Posterior vena cava (tissue), 2 donors: ENCODE measurements at regions of chr7 and their contacts with region 1.

Region 1: DNA sequence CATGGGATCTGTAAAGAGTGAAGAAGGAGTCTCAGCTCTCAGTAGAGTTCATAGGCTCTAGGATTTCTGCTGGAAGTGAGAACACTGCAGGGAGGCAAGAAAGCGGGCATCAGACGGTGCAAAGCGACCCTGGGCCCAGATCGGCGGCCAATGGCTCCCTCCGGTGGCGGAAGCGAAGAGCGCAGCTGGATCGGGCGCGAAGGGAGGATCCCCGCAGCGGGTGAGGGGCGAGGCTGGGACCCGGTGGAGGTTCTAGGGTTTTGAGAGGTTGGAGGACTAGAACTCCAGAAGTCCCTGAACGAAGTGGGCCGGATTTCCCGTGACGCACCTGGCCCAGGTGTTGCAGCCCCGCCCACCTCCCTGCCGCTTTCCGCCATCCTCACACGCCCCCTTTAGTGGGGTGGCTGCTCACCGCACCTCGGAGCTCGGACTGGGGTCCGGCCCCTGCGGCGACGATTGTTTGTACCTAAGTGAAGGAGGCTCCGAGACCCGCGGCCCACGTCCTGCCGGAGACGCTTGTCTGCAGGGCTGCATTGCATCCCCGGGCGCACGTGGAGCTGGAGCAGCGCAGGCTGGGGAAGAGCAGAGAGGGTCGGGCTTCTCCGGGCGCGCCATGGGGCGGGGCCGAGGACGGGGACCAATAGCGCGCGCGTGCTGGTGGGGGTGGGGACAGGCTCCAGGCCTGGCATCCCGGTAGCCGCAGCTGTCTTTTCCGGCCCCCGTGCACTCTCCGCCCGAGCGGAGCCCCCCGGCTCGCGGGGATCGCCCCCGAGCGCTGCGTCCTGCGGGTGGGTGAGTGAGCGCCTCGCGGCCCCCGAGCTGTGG is at the start of gene SLC12A9:
- DNase-seq: peak; percentile 98
- total RNA-seq, gene SLC12A9: 15.6 to 22.8 TPM

Region 2: GRCh38 chr7:100705753-100706671 is 146.2 kb before region 1 on chr7 and contains the start of gene POP7:
- intact Hi-C with region 1: loop called in 1 of 2 experiments (anchors 5 kb)
- DNase-seq: peak; percentile 100
- total RNA-seq, gene POP7: 17.1 to 23.0 TPM

Region 3: DNA sequence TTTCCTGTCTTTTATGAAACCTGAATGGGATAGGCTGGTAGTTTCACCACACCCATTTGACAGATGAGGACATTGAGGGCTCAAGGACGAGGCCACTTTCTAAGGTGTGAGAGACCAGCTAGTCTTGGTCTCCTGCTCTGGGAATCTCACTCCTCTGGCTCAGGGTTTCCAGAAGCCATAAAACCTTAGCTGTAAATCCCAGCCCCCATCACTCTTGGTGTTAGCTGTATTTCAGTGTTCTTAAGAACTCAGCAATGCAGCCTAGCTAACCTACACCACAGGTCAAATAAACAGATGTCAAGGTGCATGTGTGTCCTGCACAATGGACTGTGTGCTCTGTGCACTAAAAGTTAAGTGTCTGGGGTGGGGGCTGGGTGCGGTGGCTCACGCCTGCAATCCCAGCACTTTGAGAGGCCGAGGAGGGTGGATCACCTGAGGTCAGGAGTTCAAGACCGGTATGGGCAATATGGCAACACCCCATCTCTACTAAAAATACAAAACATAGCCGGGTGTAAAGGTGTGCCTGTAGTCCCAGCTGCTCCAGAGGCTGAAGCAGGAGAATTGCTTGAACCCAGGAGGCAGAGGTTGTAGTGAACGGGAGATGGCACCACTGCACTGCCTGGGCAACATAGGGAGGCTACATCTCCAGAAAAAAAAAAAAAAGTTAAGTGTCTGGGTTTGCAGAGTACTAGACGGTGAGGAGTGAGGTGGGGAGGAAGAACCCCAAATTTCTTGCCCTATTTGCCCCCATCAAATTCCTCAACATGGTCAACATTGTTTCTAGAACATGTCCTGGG is 132.5 kb before region 1 on chr7:
- intact Hi-C with region 1: loop called in 1 of 2 experiments (anchors 10 kb)
- DNase-seq: no peak

Region 4: GRCh38 chr7:100799014-100799896 is 53.0 kb before region 1 on chr7:
- intact Hi-C with region 1: loop called (anchors 2 to 5 kb)
- DNase-seq: peak; percentile 84

Region 5: DNA sequence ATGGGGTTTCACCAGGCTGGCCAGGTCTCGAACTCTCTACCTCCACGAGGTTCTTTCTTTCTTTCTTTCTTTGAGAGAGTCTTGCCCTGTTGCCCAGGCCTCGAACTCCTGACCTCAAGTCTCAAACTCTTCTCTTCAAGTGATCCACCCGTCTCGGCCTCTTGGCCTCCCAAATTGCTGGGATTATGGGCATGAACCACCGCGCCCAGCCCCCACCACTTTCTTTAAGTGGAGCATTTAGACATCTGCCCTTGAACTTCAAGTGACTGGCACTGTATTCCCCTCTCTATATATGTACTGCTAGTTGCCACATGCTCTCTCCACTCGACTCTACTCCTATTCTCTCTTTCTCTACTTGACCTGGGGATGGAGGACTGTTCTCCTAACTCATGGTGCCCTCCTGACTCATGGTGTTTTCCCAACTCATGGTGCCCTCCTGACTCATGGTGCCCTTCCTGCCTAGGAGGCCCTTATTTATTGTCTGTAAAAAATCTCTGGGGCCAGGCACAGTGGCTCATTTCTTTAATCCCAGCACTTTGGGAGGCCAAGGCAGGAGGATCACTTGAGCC is 62.7 kb after region 1 on chr7:
- intact Hi-C with region 1: no loop called
- DNase-seq: peak; percentile 62

Region 6: DNA sequence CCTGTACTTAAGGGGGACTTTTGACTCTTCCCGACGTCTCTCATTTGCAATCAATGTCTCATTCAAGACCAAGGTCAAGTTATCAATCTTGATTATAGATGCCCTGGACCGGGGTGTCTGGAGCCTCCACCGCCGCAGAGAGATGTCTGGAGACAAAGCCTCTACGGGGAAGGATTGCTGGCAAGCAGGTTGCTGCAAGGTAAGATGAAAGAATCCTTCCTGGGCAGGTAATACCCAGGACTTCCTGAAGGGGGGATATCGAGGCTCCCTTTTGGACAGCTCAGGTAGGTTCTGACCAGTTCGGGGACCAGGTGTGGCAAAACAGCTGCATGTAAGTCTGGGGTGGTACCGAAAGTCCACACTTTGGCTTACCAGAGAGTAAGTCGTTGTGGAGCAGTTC is 952.7 kb after region 1 on chr7:
- intact Hi-C with region 1: no loop called
- DNase-seq: peak; percentile 28